Prostate gland (tissue), 2 donors: ENCODE measurements at regions of chr1 and their contacts with region 1.

Region 1: GRCh38 chr1:227378871-227379554 is 60.7 kb upstream of the CDC42BPA start:
- DNase-seq: no peak
- H3K4me3 ChIP-seq: no peak overlapping the region
- H3K27ac ChIP-seq: no peak overlapping the region
- H3K4me1 ChIP-seq: no peaks in the 10 kb centered on the region
- H3K27me3 ChIP-seq: no peaks in the 10 kb centered on the region
- CTCF ChIP-seq: no peak
- POLR2A ChIP-seq: no peak

Region 2: GRCh38 chr1:227411066-227411465 is 32.1 kb after region 1 on chr1:
- intact Hi-C with region 1: loop called (anchors 5 kb)
- DNase-seq: no peak
- H3K4me3 ChIP-seq: no peak overlapping the region
- H3K27ac ChIP-seq: no peak overlapping the region
- H3K4me1 ChIP-seq: no peaks in the 10 kb centered on the region
- H3K27me3 ChIP-seq: no peaks in the 10 kb centered on the region
- CTCF ChIP-seq: no peak
- POLR2A ChIP-seq: no peak